IMR-90 (cell line): ENCODE measurements at regions of chr10 and their contacts with region 1.

Region 1: GRCh38 chr10:119761106-119761505 is 35.3 kb downstream of the INPP5F start:
- DNase-seq: peak; percentile 94
- ATAC-seq: peak; percentile 88
- H3K4me3 ChIP-seq: no peak overlapping the region
- H3K27ac ChIP-seq: no peak overlapping the region
- H3K4me1 ChIP-seq: peaks cover 10% of the 10 kb centered on the region
- H3K27me3 ChIP-seq: no peaks in the 10 kb centered on the region
- CTCF ChIP-seq: no peak
- POLR2A ChIP-seq: no peak
- RAD21 ChIP-seq: no peak

Region 2: GRCh38 chr10:119644205-119644814 is 116.8 kb before region 1 on chr10:
- CTCF ChIA-PET with region 1: no interaction called
- POLR2A ChIA-PET with region 1: no interaction called
- dilution Hi-C with region 1: no loop called
- in situ Hi-C with region 1: no loop called
- intact Hi-C with region 1: no loop called
- DNase-seq: no peak
- ATAC-seq: no peak
- H3K4me3 ChIP-seq: no peak overlapping the region
- H3K27ac ChIP-seq: no peak overlapping the region
- H3K4me1 ChIP-seq: no peaks in the 10 kb centered on the region
- H3K27me3 ChIP-seq: no peaks in the 10 kb centered on the region
- CTCF ChIP-seq: peak; percentile 9; the same call in 1 of the 2 replicates
- POLR2A ChIP-seq: no peak
- RAD21 ChIP-seq: no peak

Region 3: GRCh38 chr10:119812684-119813083 is 51.6 kb after region 1 on chr10:
- CTCF ChIA-PET with region 1: no interaction called
- POLR2A ChIA-PET with region 1: no interaction called
- dilution Hi-C with region 1: no loop called
- in situ Hi-C with region 1: no loop called
- intact Hi-C with region 1: loop called (anchors 5 kb)
- DNase-seq: no peak
- ATAC-seq: no peak
- H3K4me3 ChIP-seq: no peak overlapping the region
- H3K27ac ChIP-seq: no peak overlapping the region
- H3K4me1 ChIP-seq: no peaks in the 10 kb centered on the region
- H3K27me3 ChIP-seq: no peaks in the 10 kb centered on the region
- CTCF ChIP-seq: no peak
- POLR2A ChIP-seq: no peak
- RAD21 ChIP-seq: no peak